ENCODE measurements at regions of chr9 and their contacts with region 1.

Region 1: DNA sequence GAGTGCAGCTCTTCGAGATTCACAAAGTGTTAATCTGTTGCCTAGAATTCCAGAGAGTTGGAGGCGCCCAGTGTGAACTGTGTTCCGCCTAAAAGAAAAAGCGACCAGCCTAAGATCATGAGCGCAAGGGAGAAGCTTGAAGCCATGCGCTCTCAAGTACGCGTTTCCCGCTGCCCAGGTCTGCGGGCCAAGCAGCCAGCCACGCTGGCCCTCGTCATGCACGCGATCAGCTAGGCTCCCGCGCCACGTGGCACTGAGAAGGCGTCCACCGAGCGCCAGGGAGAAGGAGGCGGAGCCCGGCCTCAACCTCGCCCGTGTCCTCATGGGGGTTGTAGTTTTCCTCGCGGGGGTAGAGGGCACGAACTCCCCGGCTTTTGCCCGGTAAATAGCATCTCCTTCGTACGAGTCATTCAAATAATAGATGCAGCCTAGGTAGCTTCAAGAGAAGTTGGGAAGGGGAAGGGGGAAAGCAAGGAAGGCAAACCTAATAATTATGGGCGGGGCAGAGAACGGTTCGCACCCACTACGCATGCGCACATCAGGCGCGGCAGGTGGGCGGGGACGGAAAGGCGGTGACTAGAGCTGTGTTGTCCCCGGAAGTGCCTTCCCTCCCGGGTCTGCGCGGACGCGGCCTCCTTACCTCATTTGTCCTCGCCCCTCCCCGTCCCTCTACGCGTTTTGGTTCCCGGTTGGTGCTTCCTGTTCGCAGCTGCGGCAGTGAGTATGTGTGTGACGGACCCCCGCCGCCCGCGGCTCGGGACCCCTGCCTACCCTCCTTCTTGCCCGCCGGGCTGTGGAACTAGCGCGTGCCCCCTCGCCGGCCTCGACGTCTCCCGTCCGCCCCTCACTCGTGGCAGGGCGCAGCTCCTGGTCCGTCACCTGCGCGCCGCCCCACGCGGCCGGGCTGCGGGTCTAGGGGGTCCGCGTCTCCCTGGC is at the start of gene ZCCHC7:
- DNase-seq: peak; percentile 98
- H3K4me3 Mint-ChIP-seq: peak within 1 kb of the TSS; percentile 94
- H3K27ac Mint-ChIP-seq: peak within 1 kb of the TSS; percentile 96
- H3K4me1 Mint-ChIP-seq: peaks cover 35% of the 10 kb centered on the region
- H3K27me3 Mint-ChIP-seq: no peaks in the 10 kb centered on the region
- total RNA-seq, gene ZCCHC7: 28.8 to 29.1 TPM

Region 2: DNA sequence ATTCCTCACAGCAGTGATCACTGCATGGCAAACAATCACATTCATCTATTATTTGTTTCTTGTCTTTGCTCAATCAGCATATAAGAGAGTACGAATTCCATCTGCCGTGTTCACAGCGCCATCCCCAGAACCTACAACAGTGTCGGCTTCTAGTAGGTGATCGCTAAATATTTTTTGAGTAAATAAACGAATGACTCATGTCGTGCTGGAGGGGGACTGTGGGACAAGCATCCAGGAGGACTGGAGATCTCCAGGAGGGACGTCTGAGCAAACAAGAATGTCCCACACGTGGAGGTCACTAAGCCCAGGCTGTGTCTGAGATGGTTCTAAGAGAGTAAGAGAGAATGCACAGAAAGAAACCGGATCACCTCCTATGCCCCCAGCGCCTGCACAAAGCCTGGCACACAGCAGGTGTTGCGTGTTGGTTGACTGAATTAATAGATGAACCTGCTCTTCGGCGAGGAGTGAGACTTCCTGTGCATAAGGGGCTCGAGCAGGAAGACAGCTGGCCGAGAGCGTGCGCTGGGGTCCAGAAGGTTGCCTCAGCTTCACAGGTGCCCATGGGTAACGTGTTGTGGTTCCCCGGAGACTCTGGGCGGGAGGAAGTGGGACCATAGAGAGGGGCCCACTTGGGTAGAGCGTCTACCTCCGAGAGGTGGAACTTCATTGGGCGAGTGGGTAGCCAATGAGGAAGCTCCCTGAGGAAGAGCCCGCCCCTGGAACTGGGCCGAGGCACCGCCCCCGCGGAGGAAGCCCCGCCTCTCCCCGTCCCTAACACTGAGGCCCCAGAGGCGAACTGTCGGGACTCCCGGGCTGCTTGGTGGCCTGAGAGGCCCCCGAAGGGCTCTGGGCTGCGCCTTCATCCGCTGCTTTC is 354.5 kb before region 1 on chr9:
- CTCF ChIA-PET with region 1: no interaction called
- intact Hi-C with region 1: loop called (anchors 2 kb)
- DNase-seq: peak; percentile 95
- H3K4me3 Mint-ChIP-seq: peak overlapping the region; percentile 70
- H3K27ac Mint-ChIP-seq: no peak overlapping the region
- H3K4me1 Mint-ChIP-seq: no peaks in the 10 kb centered on the region
- H3K27me3 Mint-ChIP-seq: peaks cover 4% of the 10 kb centered on the region

Region 3: DNA sequence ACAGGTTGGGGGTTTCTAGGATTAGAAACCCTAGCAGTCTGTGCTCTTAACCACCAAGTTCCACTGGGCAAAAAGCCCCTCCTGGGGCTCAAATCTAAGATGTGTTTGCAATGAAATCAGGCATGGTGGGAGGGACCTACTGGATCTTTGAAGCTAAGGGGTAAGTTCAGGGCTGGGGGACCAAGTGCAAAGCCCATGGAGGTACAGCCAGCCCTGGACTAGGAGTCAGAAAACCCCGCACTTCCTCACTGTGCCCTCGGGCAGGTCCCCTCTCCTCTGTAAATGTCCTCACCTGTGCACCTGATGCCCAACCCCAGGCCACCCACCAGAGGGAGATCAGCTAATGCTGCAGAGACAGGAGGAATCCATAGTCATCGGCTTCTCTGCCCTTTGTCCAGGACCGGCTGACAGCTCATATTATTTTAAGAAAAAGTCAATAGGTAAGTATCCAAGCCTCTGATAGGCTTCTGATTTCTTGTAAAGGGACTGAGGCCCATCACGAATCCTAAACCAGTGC is 224.4 kb before region 1 on chr9:
- CTCF ChIA-PET with region 1: no interaction called
- intact Hi-C with region 1: no loop called
- DNase-seq: no peak
- H3K4me3 Mint-ChIP-seq: no peak overlapping the region
- H3K27ac Mint-ChIP-seq: no peak overlapping the region
- H3K4me1 Mint-ChIP-seq: no peaks in the 10 kb centered on the region
- H3K27me3 Mint-ChIP-seq: no peaks in the 10 kb centered on the region

Region 4: DNA sequence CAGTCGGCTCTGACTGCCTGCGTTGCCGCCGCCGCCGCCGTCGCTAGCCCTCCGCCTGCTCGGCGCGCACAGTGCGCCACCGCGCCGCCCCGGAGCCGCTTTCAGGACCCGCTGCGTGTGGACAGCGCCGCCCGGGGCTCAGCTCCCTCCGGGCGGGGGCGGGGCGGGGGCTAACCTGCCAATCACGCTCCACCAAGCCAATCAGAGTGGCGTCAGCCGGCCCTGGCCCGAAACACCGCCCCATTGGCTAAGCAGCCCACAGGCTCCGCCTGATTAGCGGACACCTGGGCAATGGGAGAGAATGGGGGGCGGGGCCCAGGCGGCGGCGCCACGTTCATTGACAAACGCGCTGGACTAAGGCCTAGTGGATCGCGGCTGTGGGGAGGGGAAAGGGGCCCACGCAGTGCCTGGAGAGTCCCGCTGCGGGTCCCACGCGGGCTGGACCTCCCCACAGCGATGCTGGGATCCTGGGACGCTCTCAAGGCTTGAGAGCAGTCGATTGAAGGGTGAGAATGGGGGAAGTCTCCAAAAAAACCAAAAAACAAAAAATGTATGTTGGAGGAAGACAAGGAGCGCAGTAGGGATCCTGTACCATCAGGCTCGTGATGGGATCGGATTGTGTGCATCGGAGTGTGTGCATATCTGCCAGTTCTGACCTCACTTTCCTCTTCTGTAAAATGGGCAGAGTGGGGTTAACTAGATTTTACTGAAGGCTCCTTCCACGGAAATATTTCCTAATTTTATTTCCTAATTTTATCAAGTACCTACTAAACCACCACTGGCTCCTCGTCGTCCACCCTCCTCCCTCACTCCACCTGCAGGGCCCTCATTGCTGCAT is 92.4 kb before region 1 on chr9:
- CTCF ChIA-PET with region 1: no interaction called
- intact Hi-C with region 1: loop called (anchors 2 kb)
- DNase-seq: peak; percentile 95
- H3K4me3 Mint-ChIP-seq: peak overlapping the region; percentile 66
- H3K27ac Mint-ChIP-seq: no peak overlapping the region
- H3K4me1 Mint-ChIP-seq: peaks cover 48% of the 10 kb centered on the region
- H3K27me3 Mint-ChIP-seq: peaks cover 85% of the 10 kb centered on the region

Region 5: DNA sequence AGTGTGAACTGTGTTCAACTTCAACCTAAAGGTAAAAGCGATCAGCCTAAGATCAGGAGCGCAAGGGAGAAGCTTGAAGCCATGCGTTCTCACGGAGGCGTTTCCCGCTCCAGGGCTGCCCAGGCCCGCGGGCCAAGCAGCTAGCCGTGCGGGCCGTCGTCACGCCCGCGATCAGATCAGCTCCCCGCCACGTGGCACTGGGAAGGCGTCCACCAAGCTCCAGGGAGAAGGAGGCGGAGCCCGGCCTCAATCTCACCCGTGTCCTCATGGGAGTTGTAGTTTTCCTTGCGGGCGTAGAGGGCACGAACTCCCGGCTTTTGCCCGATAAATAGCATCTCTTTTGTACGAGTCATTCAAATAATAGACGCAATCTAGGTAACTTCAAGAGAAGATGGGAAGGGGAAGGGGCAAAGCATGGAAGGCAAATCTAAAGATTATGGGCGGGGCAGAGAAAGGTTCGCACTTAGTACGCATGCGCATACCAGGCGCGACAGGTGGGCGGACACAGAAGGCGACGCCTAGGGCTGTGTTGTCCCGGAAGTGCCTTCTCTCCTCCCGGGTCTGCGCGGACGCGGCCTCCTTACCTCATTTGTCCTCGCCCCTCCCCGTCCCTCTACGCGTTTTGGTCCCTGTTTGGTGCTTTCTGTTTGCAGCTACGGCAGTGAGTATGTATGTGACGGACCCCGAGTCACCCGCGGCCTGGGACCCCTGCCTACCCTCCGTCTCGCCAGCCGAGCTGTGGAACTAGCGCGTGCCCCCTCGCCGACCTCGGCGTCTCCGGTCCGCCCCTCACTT is 40.6 kb before region 1 on chr9:
- CTCF ChIA-PET with region 1: no interaction called
- intact Hi-C with region 1: loop called (anchors 1 kb)
- DNase-seq: peak; percentile 95
- H3K4me3 Mint-ChIP-seq: peak overlapping the region; percentile 89
- H3K27ac Mint-ChIP-seq: peak overlapping the region; percentile 95
- H3K4me1 Mint-ChIP-seq: peaks cover 39% of the 10 kb centered on the region
- H3K27me3 Mint-ChIP-seq: no peaks in the 10 kb centered on the region

Region 6: GRCh38 chr9:37209431-37210386 is 89.5 kb after region 1 on chr9:
- CTCF ChIA-PET with region 1: no interaction called
- intact Hi-C with region 1: loop called (anchors 5 kb)
- DNase-seq: no peak
- H3K4me3 Mint-ChIP-seq: no peak overlapping the region
- H3K27ac Mint-ChIP-seq: no peak overlapping the region
- H3K4me1 Mint-ChIP-seq: peaks cover 36% of the 10 kb centered on the region
- H3K27me3 Mint-ChIP-seq: no peaks in the 10 kb centered on the region

Region 7: GRCh38 chr9:37293664-37294524 is 173.7 kb after region 1 on chr9:
- CTCF ChIA-PET with region 1: no interaction called
- intact Hi-C with region 1: loop called (anchors 2 kb)
- DNase-seq: no peak
- H3K4me3 Mint-ChIP-seq: no peak overlapping the region
- H3K27ac Mint-ChIP-seq: peak overlapping the region; percentile 81
- H3K4me1 Mint-ChIP-seq: peaks cover 72% of the 10 kb centered on the region
- H3K27me3 Mint-ChIP-seq: no peaks in the 10 kb centered on the region

Measured in activated naive CD4-positive, alpha-beta T cell treated with anti-CD3 and anti-CD28 coated beads for 36 hours (primary cell).